IMR-90 (cell line): ENCODE measurements at regions of chr12 and their contacts with region 1.

Region 1: GRCh38 chr12:79108962-79109361 is 244.4 kb downstream of the SYT1 start:
- DNase-seq: no peak
- ATAC-seq: no peak
- H3K4me3 ChIP-seq: no peak overlapping the region
- H3K27ac ChIP-seq: no peak overlapping the region
- H3K4me1 ChIP-seq: no peaks in the 10 kb centered on the region
- H3K27me3 ChIP-seq: no peaks in the 10 kb centered on the region
- CTCF ChIP-seq: no peak
- POLR2A ChIP-seq: no peak
- RAD21 ChIP-seq: no peak

Region 2: GRCh38 chr12:78519422-78519821 is 589.5 kb before region 1 on chr12:
- CTCF ChIA-PET with region 1: no interaction called
- POLR2A ChIA-PET with region 1: no interaction called
- dilution Hi-C with region 1: no loop called
- in situ Hi-C with region 1: no loop called
- intact Hi-C with region 1: no loop called
- DNase-seq: no peak
- ATAC-seq: no peak
- H3K4me3 ChIP-seq: no peak overlapping the region
- H3K27ac ChIP-seq: no peak overlapping the region
- H3K4me1 ChIP-seq: no peaks in the 10 kb centered on the region
- H3K27me3 ChIP-seq: no peaks in the 10 kb centered on the region
- CTCF ChIP-seq: no peak
- POLR2A ChIP-seq: no peak
- RAD21 ChIP-seq: no peak

Region 3: GRCh38 chr12:78793491-78793890 is 315.5 kb before region 1 on chr12:
- CTCF ChIA-PET with region 1: no interaction called
- POLR2A ChIA-PET with region 1: no interaction called
- dilution Hi-C with region 1: no loop called
- in situ Hi-C with region 1: no loop called
- intact Hi-C with region 1: no loop called
- DNase-seq: peak; percentile 3
- ATAC-seq: no peak
- H3K4me3 ChIP-seq: no peak overlapping the region
- H3K27ac ChIP-seq: no peak overlapping the region
- H3K4me1 ChIP-seq: no peaks in the 10 kb centered on the region
- H3K27me3 ChIP-seq: no peaks in the 10 kb centered on the region
- CTCF ChIP-seq: no peak
- POLR2A ChIP-seq: no peak
- RAD21 ChIP-seq: no peak

Region 4: GRCh38 chr12:79140711-79141110 is 31.7 kb after region 1 on chr12:
- CTCF ChIA-PET with region 1: interaction called, 5 read pairs
- POLR2A ChIA-PET with region 1: interaction called, 13 read pairs
- dilution Hi-C with region 1: no loop called
- in situ Hi-C with region 1: no loop called
- intact Hi-C with region 1: no loop called
- DNase-seq: no peak
- ATAC-seq: no peak
- H3K4me3 ChIP-seq: no peak overlapping the region
- H3K27ac ChIP-seq: no peak overlapping the region
- H3K4me1 ChIP-seq: no peaks in the 10 kb centered on the region
- H3K27me3 ChIP-seq: no peaks in the 10 kb centered on the region
- CTCF ChIP-seq: no peak
- POLR2A ChIP-seq: no peak
- RAD21 ChIP-seq: no peak